Activated CD8-positive, alpha-beta T cell treated with anti-CD3 and anti-CD28 coated beads for 36 hours (primary cell): ENCODE measurements at regions of chr3 and their contacts with region 1.

Region 1: GRCh38 chr3:171459942-171460724 is at the start of gene TNIK:
- DNase-seq: peak; percentile 98
- ATAC-seq: peak; percentile 84
- H3K4me3 Mint-ChIP-seq: peak within 1 kb of the TSS; percentile 95
- H3K27ac Mint-ChIP-seq: peak within 1 kb of the TSS; percentile 89
- H3K4me1 Mint-ChIP-seq: peaks cover 38% of the 10 kb centered on the region
- H3K27me3 Mint-ChIP-seq: no peaks in the 10 kb centered on the region
- CTCF ChIP-seq: peak; percentile 22
- total RNA-seq, gene TNIK: 25.1 to 28.8 TPM

Region 2: DNA sequence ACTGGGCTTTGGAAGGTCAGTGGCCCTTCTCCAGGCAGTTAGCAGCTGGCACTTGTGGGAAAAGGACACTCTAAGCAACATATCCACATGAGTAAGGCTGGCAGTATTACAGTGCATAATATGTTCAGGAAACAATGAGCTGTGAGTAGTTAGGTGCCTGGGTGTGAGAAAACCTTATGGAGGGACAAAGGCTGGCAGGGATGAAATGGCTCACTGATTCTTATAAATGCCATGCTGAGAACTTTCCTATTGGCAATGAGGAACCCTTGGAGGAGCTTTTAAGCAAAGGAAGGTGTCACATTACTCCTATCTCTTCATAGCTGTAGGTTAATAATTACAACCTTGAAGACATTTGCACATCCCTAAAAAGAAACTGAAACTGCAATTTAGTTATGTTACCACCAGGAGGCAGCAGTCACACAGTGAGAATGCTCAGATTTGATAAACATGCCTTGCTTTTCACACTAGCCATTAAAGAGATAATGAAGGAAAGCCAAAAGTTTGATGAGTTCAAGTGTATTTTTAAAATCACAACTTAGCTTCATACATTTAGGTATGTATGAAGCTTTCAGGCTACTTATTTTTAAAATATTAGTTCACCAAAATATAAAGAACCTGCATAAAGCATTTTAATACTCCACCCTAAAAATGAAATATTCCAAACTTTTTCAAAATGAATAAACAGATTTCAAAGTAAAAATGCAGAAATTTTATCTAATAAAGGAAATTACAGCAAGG is 297.0 kb before region 1 on chr3:
- CTCF ChIA-PET with region 1: interaction called, 10 read pairs
- POLR2A ChIA-PET with region 1: interaction called, 4 read pairs
- intact Hi-C with region 1: loop called (anchors 10 kb)
- DNase-seq: peak; percentile 20
- ATAC-seq: peak; percentile 42
- H3K4me3 Mint-ChIP-seq: no peak overlapping the region
- H3K27ac Mint-ChIP-seq: no peak overlapping the region
- H3K4me1 Mint-ChIP-seq: peaks cover 25% of the 10 kb centered on the region
- H3K27me3 Mint-ChIP-seq: no peaks in the 10 kb centered on the region
- CTCF ChIP-seq: peak; percentile 93

Region 3: DNA sequence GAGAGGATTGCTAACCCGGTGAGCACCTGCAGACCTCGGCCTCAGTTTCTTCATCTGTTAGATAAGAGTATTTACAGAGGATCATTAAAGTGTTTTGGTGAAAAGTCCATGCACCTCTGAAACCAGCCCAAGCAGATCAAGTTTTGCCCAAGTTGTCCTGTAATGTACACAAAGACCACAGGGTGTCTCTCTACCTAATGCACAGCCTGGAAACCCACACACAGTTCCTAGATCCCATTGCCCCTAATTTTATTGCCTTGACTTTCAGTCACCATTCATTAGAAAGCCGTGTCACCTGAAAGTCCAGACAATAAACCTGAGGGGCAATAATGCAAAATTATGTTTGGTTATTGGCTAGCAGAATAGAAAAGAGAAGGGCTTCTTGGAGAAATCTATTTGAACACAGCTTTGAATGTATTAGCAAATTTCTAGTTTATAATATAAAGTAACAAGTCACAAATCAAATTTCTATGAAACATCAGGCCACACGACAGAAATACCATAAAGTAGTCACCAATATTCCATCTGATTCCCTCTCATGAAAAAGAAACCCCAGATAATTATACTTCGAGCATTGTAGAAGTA is 272.3 kb before region 1 on chr3:
- CTCF ChIA-PET with region 1: interaction called, 8 read pairs
- POLR2A ChIA-PET with region 1: interaction called, 6 read pairs
- intact Hi-C with region 1: loop called (anchors 5 kb)
- DNase-seq: peak; percentile 11
- ATAC-seq: no peak
- H3K4me3 Mint-ChIP-seq: no peak overlapping the region
- H3K27ac Mint-ChIP-seq: peak overlapping the region; percentile 15
- H3K4me1 Mint-ChIP-seq: peaks cover 57% of the 10 kb centered on the region
- H3K27me3 Mint-ChIP-seq: no peaks in the 10 kb centered on the region
- CTCF ChIP-seq: peak; percentile 64

Region 4: DNA sequence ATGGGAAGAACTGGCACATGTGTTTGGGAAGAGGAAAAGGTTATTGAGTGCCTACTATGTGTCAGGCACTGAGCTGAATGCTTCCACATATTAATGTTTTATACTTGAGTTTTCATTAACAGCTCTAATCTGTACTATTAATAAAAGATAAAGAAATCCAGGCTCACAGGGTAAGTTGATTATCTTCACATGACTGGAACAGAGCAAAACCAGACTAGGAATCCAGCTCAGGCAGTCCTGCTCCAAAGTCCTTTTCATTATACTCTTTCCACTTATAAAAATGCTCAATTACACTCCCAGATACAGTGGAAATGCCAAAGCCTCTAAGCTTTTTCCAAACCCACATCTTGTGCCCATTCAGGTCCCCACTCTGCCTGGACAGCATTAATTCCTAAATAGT is 97.6 kb before region 1 on chr3:
- CTCF ChIA-PET with region 1: no interaction called
- POLR2A ChIA-PET with region 1: no interaction called
- intact Hi-C with region 1: no loop called
- DNase-seq: no peak
- ATAC-seq: no peak
- H3K4me3 Mint-ChIP-seq: no peak overlapping the region
- H3K27ac Mint-ChIP-seq: no peak overlapping the region
- H3K4me1 Mint-ChIP-seq: peaks cover 36% of the 10 kb centered on the region
- H3K27me3 Mint-ChIP-seq: no peaks in the 10 kb centered on the region
- CTCF ChIP-seq: no peak

Region 5: DNA sequence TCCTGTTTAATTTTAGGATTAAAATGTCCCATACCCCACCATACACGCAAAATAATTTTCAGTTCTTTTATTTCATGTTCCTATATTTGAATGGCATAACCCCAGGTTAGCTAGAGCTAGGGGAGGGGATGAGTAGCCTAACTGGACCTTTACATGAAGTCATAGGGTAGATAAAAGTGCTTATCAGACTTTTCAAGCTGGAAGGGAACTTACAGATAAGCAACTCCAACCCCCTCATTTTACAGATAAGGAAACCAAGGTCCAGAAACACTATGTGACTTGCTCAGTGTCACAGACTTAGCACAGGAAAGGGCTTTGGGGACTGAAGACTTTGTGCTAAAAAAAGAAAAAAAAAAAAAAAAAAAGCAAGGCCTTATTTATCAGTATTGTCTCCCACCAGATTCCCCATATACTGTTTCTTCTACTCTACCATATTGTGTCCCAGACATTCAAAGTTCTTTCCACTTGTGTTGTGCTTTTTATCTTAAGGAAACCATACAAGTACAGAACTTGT is 10.6 kb after region 1 on chr3:
- CTCF ChIA-PET with region 1: interaction called, 5 read pairs
- POLR2A ChIA-PET with region 1: interaction called, 14 read pairs
- intact Hi-C with region 1: no loop called
- DNase-seq: no peak
- ATAC-seq: no peak
- H3K4me3 Mint-ChIP-seq: no peak overlapping the region
- H3K27ac Mint-ChIP-seq: no peak overlapping the region
- H3K4me1 Mint-ChIP-seq: no peaks in the 10 kb centered on the region
- H3K27me3 Mint-ChIP-seq: no peaks in the 10 kb centered on the region
- CTCF ChIP-seq: no peak

Region 6: GRCh38 chr3:171480526-171480925 is 20.4 kb after region 1 on chr3:
- CTCF ChIA-PET with region 1: interaction called, 22 read pairs
- POLR2A ChIA-PET with region 1: interaction called, 12 read pairs
- intact Hi-C with region 1: no loop called
- DNase-seq: peak; percentile 22
- ATAC-seq: peak; percentile 82
- H3K4me3 Mint-ChIP-seq: peak overlapping the region; percentile 19
- H3K27ac Mint-ChIP-seq: peak overlapping the region; percentile 82
- H3K4me1 Mint-ChIP-seq: peaks cover 15% of the 10 kb centered on the region
- H3K27me3 Mint-ChIP-seq: no peaks in the 10 kb centered on the region
- CTCF ChIP-seq: no peak

Region 7: GRCh38 chr3:171561596-171562323 is 101.6 kb after region 1 on chr3:
- CTCF ChIA-PET with region 1: interaction called, 5 read pairs
- POLR2A ChIA-PET with region 1: no interaction called
- intact Hi-C with region 1: loop called (anchors 5 kb)
- DNase-seq: peak; percentile 19
- ATAC-seq: peak; percentile 70
- H3K4me3 Mint-ChIP-seq: peak overlapping the region; percentile 21
- H3K27ac Mint-ChIP-seq: peak overlapping the region; percentile 92
- H3K4me1 Mint-ChIP-seq: peaks cover 20% of the 10 kb centered on the region
- H3K27me3 Mint-ChIP-seq: no peaks in the 10 kb centered on the region
- CTCF ChIP-seq: no peak

Region 8: GRCh38 chr3:171584100-171584499 is 124.0 kb after region 1 on chr3:
- CTCF ChIA-PET with region 1: no interaction called
- POLR2A ChIA-PET with region 1: no interaction called
- intact Hi-C with region 1: no loop called
- DNase-seq: no peak
- ATAC-seq: no peak
- H3K4me3 Mint-ChIP-seq: no peak overlapping the region
- H3K27ac Mint-ChIP-seq: no peak overlapping the region
- H3K4me1 Mint-ChIP-seq: no peaks in the 10 kb centered on the region
- H3K27me3 Mint-ChIP-seq: no peaks in the 10 kb centered on the region
- CTCF ChIP-seq: no peak